ENCODE measurements at regions of chr4 and their contacts with region 1.

Region 1: GRCh38 chr4:145125396-145125795 is 27.3 kb downstream of the ABCE1 start:
- DNase-seq: no peak
- ATAC-seq: no peak
- H3K4me3 ChIP-seq: no peak overlapping the region
- H3K4me3 Mint-ChIP-seq: no peak overlapping the region
- H3K27ac ChIP-seq: no peak overlapping the region
- H3K27ac Mint-ChIP-seq: no peak overlapping the region
- H3K4me1 ChIP-seq: no peaks in the 10 kb centered on the region
- H3K4me1 Mint-ChIP-seq: no peaks in the 10 kb centered on the region
- H3K27me3 ChIP-seq: no peaks in the 10 kb centered on the region
- H3K27me3 Mint-ChIP-seq: no peaks in the 10 kb centered on the region
- CTCF ChIP-seq: no peak

Region 2: DNA sequence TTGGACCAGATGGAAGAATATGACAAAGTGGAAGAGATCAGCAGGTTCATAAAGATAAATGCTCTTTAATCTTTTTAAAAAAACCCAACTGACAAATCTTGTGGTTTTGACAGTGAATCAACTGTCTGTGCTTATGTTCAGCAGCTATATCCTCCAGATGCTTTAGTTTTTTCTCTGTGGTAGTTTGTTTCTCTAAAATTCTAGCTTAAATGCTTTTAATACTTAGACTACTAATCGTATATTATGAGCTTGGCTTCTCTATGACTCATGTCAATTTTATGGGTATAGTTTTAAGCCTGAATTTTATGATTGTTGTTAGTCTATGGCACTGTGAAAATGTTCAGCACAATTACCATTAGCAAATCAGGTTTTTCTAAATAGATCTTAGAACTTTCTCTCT is 466.5 kb before region 1 on chr4:
- CTCF ChIA-PET with region 1: no interaction called
- POLR2A ChIA-PET with region 1: no interaction called
- intact Hi-C with region 1: no loop called
- DNase-seq: no peak
- ATAC-seq: no peak
- H3K4me3 ChIP-seq: no peak overlapping the region
- H3K4me3 Mint-ChIP-seq: no peak overlapping the region
- H3K27ac ChIP-seq: no peak overlapping the region
- H3K27ac Mint-ChIP-seq: no peak overlapping the region
- H3K4me1 ChIP-seq: no peaks in the 10 kb centered on the region
- H3K4me1 Mint-ChIP-seq: no peaks in the 10 kb centered on the region
- H3K27me3 ChIP-seq: no peaks in the 10 kb centered on the region
- H3K27me3 Mint-ChIP-seq: no peaks in the 10 kb centered on the region
- CTCF ChIP-seq: no peak

Region 3: DNA sequence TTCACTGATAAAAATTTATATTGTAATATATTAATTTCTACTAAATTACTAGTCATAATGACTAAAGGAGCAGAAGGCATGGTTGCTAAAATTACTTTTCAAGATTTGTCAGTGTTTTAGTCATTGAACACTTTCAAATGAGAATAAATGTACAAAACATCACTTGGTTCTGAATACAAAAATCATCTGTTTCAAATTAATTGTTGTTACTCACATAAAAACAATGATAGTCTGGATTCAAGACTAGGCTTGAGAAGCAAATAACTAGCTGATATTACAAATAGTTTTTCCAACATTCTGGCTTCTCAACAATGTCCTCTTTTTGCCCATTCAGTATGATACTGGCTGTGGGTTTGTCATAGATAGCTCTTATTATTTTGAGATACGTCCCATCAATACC is 139.9 kb before region 1 on chr4:
- CTCF ChIA-PET with region 1: no interaction called
- POLR2A ChIA-PET with region 1: no interaction called
- intact Hi-C with region 1: no loop called
- DNase-seq: no peak
- ATAC-seq: no peak
- H3K4me3 ChIP-seq: no peak overlapping the region
- H3K4me3 Mint-ChIP-seq: no peak overlapping the region
- H3K27ac ChIP-seq: no peak overlapping the region
- H3K27ac Mint-ChIP-seq: no peak overlapping the region
- H3K4me1 ChIP-seq: no peaks in the 10 kb centered on the region
- H3K4me1 Mint-ChIP-seq: no peaks in the 10 kb centered on the region
- H3K27me3 ChIP-seq: no peaks in the 10 kb centered on the region
- H3K27me3 Mint-ChIP-seq: no peaks in the 10 kb centered on the region
- CTCF ChIP-seq: no peak

Region 4: DNA sequence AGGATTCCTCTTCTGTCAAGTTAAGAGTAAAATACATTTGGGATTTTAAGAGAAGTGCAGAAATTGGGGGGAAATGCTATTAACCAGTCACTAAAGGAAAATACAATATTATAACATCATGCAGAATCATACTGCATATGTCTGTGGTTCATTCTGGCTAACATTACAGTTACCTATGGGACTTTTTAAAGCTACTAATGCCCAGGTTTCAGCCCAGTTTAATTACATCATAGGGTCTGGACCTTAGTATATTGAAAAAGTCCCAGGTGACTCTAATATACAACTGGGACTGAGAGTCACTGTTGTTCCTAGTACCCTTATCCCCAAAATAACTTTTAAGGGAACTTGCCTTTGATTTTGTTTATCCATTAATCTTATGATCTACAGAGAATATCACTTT is 17.3 kb before region 1 on chr4:
- CTCF ChIA-PET with region 1: interaction called, 3 read pairs
- POLR2A ChIA-PET with region 1: no interaction called
- intact Hi-C with region 1: loop called (anchors 2 kb)
- DNase-seq: no peak
- ATAC-seq: no peak
- H3K4me3 ChIP-seq: no peak overlapping the region
- H3K4me3 Mint-ChIP-seq: no peak overlapping the region
- H3K27ac ChIP-seq: no peak overlapping the region
- H3K27ac Mint-ChIP-seq: no peak overlapping the region
- H3K4me1 ChIP-seq: peaks cover 4 to 6% of the 10 kb centered on the region in 2 donors
- H3K4me1 Mint-ChIP-seq: peaks cover 10% of the 10 kb centered on the region
- H3K27me3 ChIP-seq: no peaks in the 10 kb centered on the region
- H3K27me3 Mint-ChIP-seq: no peaks in the 10 kb centered on the region
- CTCF ChIP-seq: no peak

Measured in B cell (primary cell).